IMR-90 (cell line): ENCODE measurements at regions of chr4 and their contacts with region 1.

Region 1: GRCh38 chr4:115529126-115529525 is 415.7 kb upstream of the NDST4 start:
- DNase-seq: no peak
- ATAC-seq: no peak
- H3K4me3 ChIP-seq: no peak overlapping the region
- H3K27ac ChIP-seq: no peak overlapping the region
- H3K4me1 ChIP-seq: no peaks in the 10 kb centered on the region
- H3K27me3 ChIP-seq: no peaks in the 10 kb centered on the region
- CTCF ChIP-seq: no peak
- POLR2A ChIP-seq: no peak
- RAD21 ChIP-seq: no peak

Region 2: GRCh38 chr4:115201042-115201330 is 328.1 kb before region 1 on chr4:
- CTCF ChIA-PET with region 1: no interaction called
- POLR2A ChIA-PET with region 1: no interaction called
- dilution Hi-C with region 1: no loop called
- in situ Hi-C with region 1: no loop called
- intact Hi-C with region 1: no loop called
- DNase-seq: no peak
- ATAC-seq: no peak
- H3K4me3 ChIP-seq: no peak overlapping the region
- H3K27ac ChIP-seq: no peak overlapping the region
- H3K4me1 ChIP-seq: no peaks in the 10 kb centered on the region
- H3K27me3 ChIP-seq: no peaks in the 10 kb centered on the region
- CTCF ChIP-seq: no peak
- POLR2A ChIP-seq: no peak
- RAD21 ChIP-seq: no peak

Region 3: DNA sequence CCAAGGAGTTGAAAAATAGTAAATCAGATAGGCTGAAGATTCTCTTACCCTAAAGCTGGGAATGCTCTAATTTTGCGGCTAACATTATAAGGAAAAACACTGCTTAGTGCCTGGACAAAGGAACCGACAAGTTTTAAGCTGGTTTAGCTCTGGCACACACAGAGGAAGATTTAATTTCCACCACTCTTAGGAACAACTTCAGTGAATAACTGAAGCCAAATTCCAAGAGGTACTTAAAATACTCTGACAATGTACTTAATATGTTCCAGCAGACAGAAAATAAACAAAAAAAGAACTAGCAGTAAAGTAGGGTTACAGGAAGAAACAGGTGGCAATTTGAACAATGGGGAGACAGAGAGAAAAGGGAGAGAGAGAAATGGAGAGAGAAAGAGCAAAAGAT is 74.9 kb before region 1 on chr4:
- CTCF ChIA-PET with region 1: no interaction called
- POLR2A ChIA-PET with region 1: interaction called, 13 read pairs
- dilution Hi-C with region 1: no loop called
- in situ Hi-C with region 1: no loop called
- intact Hi-C with region 1: no loop called
- DNase-seq: no peak
- ATAC-seq: no peak
- H3K4me3 ChIP-seq: no peak overlapping the region
- H3K27ac ChIP-seq: no peak overlapping the region
- H3K4me1 ChIP-seq: no peaks in the 10 kb centered on the region
- H3K27me3 ChIP-seq: no peaks in the 10 kb centered on the region
- CTCF ChIP-seq: no peak
- POLR2A ChIP-seq: no peak
- RAD21 ChIP-seq: no peak

Region 4: DNA sequence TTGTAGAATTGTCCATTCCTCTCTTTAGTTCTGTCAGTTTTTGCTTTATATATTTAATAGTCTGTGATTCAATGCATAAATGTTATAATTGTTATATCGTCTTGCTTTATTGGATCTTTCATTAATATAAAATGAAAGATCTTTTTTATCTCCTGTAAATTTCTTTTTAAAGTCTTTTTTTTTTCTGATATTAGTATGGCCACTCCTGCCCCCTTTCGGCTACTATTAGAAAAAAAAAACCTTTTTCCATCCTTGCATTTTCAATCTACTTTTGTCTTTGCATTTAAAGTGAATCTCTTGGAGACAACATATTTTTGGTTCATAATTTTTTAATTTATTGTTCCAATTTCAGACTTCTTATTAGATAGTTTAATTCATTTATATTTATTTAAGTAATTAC is 261.7 kb after region 1 on chr4:
- CTCF ChIA-PET with region 1: no interaction called
- POLR2A ChIA-PET with region 1: no interaction called
- dilution Hi-C with region 1: no loop called
- in situ Hi-C with region 1: no loop called
- intact Hi-C with region 1: no loop called
- DNase-seq: no peak
- ATAC-seq: no peak
- H3K4me3 ChIP-seq: no peak overlapping the region
- H3K27ac ChIP-seq: no peak overlapping the region
- H3K4me1 ChIP-seq: no peaks in the 10 kb centered on the region
- H3K27me3 ChIP-seq: no peaks in the 10 kb centered on the region
- CTCF ChIP-seq: no peak
- POLR2A ChIP-seq: no peak
- RAD21 ChIP-seq: no peak